ENCODE measurements at regions of chr3 and their contacts with region 1.

Region 1: GRCh38 chr3:51955893-51956770 is 951 bp downstream of the GPR62 start:
- DNase-seq: peak in 1 of 2 donors; percentile 78
- H3K4me3 ChIP-seq: peak overlapping the region; percentile 58 to 63
- H3K27ac ChIP-seq: peak overlapping the region; percentile 81 to 85
- H3K4me1 ChIP-seq: peaks cover 2 to 6% of the 10 kb centered on the region in 2 donors
- H3K27me3 ChIP-seq: no peaks in the 10 kb centered on the region
- CTCF ChIP-seq: peak; percentile 44 to 71 (median 45)

Region 2: DNA sequence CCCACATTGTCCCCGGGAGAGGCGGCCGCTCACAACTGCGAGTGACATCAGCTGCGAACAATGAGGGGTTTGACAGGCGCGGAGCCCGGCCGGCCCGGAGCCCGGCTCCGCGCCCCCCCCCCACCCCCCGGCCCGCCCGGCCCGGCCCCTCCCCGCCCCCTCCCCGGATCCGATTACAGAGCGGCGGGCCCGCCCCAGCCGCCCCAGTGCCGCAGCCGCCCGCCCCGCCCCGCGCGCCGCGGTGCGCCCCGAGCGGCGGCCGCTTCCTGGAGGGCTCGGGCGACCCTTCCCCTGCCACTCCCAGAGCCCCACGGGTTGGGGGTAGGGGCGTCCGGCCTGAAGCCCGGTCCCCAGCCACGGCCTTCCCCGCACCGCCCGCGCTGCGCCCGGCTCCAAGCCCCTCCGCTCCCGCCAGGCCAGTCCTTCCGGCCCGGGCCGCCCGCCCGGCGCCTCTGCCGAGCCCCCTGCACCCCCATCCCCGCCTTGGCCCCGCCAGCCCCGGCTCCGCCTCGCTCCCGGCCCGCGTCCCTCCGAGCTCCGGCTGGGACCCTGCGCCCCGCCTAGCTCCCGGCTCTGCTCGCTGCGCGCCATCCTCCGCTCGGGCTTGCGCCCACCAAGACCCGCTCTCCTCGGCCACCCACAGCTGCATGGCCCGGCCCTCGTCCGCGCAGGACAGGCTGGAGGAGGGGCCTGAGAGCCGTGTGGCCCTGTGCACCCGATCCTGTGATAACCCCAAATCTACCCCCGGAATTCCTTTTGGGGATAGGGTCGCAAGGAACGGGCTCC is 11.4 kb after region 1 on chr3 and contains the start of gene PCBP4:
- intact Hi-C with region 1: loop called (anchors 1 kb)
- DNase-seq: peak in 1 of 2 donors; percentile 89
- H3K4me3 ChIP-seq: peak within 1 kb of the TSS; percentile 87 to 90
- H3K27ac ChIP-seq: peak within 1 kb of the TSS; percentile 95 to 96
- H3K4me1 ChIP-seq: peaks cover 8 to 35% of the 10 kb centered on the region in 2 donors
- H3K27me3 ChIP-seq: no peaks in the 10 kb centered on the region
- CTCF ChIP-seq: no peak
- total RNA-seq, gene PCBP4: 256 TPM

Region 3: GRCh38 chr3:52099001-52099401 is 142.9 kb after region 1 on chr3:
- intact Hi-C with region 1: no loop called
- DNase-seq: no peak
- H3K4me3 ChIP-seq: no peak overlapping the region
- H3K27ac ChIP-seq: no peak overlapping the region
- H3K4me1 ChIP-seq: no peaks in the 10 kb centered on the region
- H3K27me3 ChIP-seq: no peaks in the 10 kb centered on the region
- CTCF ChIP-seq: no peak